Heart right ventricle (tissue), 16 donors: ENCODE measurements at regions of chr6 and their contacts with region 1.

Region 1: GRCh38 chr6:124205921-124206320 is 402.3 kb downstream of the NKAIN2 start:
- DNase-seq: no peak
- ATAC-seq: no peak
- H3K4me3 ChIP-seq: no peak overlapping the region
- H3K27ac ChIP-seq: no peak overlapping the region
- H3K4me1 ChIP-seq: no peaks in the 10 kb centered on the region
- H3K27me3 ChIP-seq: no peaks in the 10 kb centered on the region
- CTCF ChIP-seq: no peak

Region 2: GRCh38 chr6:123201869-123202372 is 1004.0 kb before region 1 on chr6:
- intact Hi-C with region 1: loop called in 1 of 10 experiments (anchors 5 kb)
- DNase-seq: no peak
- ATAC-seq: no peak
- H3K4me3 ChIP-seq: no peak overlapping the region
- H3K27ac ChIP-seq: no peak overlapping the region
- H3K4me1 ChIP-seq: no peaks in the 10 kb centered on the region
- H3K27me3 ChIP-seq: no peaks in the 10 kb centered on the region
- CTCF ChIP-seq: no peak